GM12878 (cell line): ENCODE measurements at regions of chr17 and their contacts with region 1.

Region 1: DNA sequence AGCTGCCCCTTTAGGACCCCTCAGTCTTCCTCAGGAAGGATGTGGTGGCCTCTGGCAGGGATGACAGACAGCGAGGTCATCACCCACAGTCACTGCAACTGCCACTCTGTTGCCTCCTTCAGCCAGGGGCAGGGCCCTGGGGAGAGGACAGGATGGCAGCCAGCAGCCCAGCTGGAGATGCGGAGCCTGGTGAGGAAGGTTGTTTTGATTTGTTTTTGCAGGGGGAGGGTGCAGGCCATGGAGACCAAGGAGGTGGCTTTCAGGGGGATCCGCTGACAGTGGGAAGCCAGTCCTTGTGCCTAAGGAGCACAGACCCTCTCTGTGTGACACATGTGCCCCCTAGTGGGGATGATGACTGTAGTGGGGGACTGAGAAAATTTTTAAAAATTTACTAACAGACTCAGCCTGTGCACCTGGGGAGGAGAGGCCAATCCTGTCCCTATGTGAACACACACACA is 7.4 kb downstream of the PRCD start:
- DNase-seq: no peak
- ATAC-seq: peak; percentile 93
- H3K4me3 ChIP-seq: no peak overlapping the region
- H3K27ac ChIP-seq: no peak overlapping the region
- H3K4me1 ChIP-seq: no peaks in the 10 kb centered on the region; the same call in 1 of the 2 replicates
- H3K27me3 ChIP-seq: peaks cover 0 to 3% of the 10 kb centered on the region in 2 experiments; a peak in 3 of 4 replicates
- CTCF ChIP-seq: peak; percentile 65 to 82 (median 80)
- EP300 ChIP-seq: no peak
- POLR2A ChIP-seq: no peak
- RAD21 ChIP-seq: peak; percentile 79

Region 2: GRCh38 chr17:76191896-76192295 is 355.3 kb before region 1 on chr17:
- CTCF ChIA-PET with region 1: no interaction called
- POLR2A ChIA-PET with region 1: no interaction called
- RAD21 ChIA-PET with region 1: no interaction called
- SMC1A ChIA-PET with region 1: no interaction called
- in situ Hi-C with region 1: no loop called
- intact Hi-C with region 1: no loop called
- DNase-seq: peak; percentile 85
- ATAC-seq: peak; percentile 84
- H3K4me3 ChIP-seq: no peak overlapping the region
- H3K27ac ChIP-seq: peak overlapping the region; percentile 81
- H3K4me1 ChIP-seq: peaks cover 44% of the 10 kb centered on the region
- H3K27me3 ChIP-seq: no peaks in the 10 kb centered on the region
- CTCF ChIP-seq: no peak
- EP300 ChIP-seq: peak; percentile 53 to 80; a peak in 3 of 4 replicates
- POLR2A ChIP-seq: no peak
- RAD21 ChIP-seq: no peak

Region 3: DNA sequence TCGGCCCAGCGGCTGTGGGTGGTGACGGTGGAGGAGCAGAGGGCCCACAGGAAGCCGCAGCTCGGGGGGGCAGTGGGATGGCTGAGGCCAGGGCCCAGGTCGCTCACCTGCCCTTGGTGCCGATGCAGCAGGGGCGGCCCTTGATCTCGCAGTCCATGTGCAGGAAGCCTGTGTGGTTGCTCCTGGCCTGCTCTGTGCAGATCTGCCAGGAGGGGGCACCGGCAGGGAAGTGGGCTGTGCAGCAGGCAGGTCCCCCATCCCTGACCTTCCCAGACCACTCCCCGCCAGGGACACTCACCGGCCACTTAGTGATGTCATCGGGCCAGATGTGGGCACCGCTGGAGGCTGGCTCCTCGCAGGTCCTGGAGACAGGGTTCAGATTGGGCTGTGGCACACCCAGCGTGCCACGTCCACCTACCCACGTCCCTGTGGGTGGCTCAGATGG is 73.7 kb before region 1 on chr17:
- CTCF ChIA-PET with region 1: no interaction called
- POLR2A ChIA-PET with region 1: no interaction called
- RAD21 ChIA-PET with region 1: no interaction called
- SMC1A ChIA-PET with region 1: no interaction called
- in situ Hi-C with region 1: no loop called
- intact Hi-C with region 1: no loop called
- DNase-seq: no peak
- ATAC-seq: peak; percentile 71
- H3K4me3 ChIP-seq: no peak overlapping the region
- H3K27ac ChIP-seq: no peak overlapping the region
- H3K4me1 ChIP-seq: no peaks in the 10 kb centered on the region
- H3K27me3 ChIP-seq: no peaks in the 10 kb centered on the region
- CTCF ChIP-seq: peak; percentile 14 to 52 (median 32); a peak in 3 of 6 replicates
- EP300 ChIP-seq: no peak
- POLR2A ChIP-seq: no peak; the same call in 1 of the 2 replicates
- RAD21 ChIP-seq: 0 out of 2 replicates have a peak, but pooled peaks have one; percentile 24

Region 4: GRCh38 chr17:76523084-76524037 is 23.9 kb before region 1 on chr17:
- CTCF ChIA-PET with region 1: interaction called, 36 read pairs
- POLR2A ChIA-PET with region 1: interaction called, 6 read pairs
- RAD21 ChIA-PET with region 1: interaction called, 15 read pairs
- SMC1A ChIA-PET with region 1: interaction called, 18 read pairs
- in situ Hi-C with region 1: no loop called
- intact Hi-C with region 1: loop called (anchors 1 kb)
- DNase-seq: no peak
- ATAC-seq: peak; percentile 75
- H3K4me3 ChIP-seq: no peak overlapping the region
- H3K27ac ChIP-seq: no peak overlapping the region
- H3K4me1 ChIP-seq: peaks cover 10% of the 10 kb centered on the region
- H3K27me3 ChIP-seq: no peaks in the 10 kb centered on the region
- CTCF ChIP-seq: peak; percentile 99 to 100 (median 99); a peak in 5 of 6 replicates
- EP300 ChIP-seq: no peak
- POLR2A ChIP-seq: no peak
- RAD21 ChIP-seq: peak; percentile 89